ENCODE measurements at regions of chr3 and their contacts with region 1.

Region 1: GRCh38 chr3:120558771-120559241 is 37.3 kb upstream of the NDUFB4 start:
- DNase-seq: peak; percentile 91
- ATAC-seq: peak; percentile 53

Region 2: DNA sequence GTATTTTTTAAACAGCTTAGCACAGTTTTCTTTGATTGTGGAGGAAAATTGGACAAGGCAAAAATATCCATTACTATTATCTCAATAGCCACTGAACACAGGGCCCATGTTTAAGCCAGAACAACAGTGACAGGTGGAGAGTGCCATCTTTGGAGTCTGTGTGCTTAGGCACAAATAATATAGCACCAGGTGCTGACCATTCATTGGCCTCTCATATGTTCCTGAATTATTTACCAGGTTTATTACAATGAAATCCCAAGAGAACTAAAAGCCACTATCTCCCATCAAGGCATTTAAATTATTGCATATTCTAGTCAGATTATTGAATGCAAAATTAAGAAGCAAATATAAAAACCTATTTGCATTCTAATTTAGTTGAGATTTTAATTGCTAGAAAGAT is 313.4 kb before region 1 on chr3:
- intact Hi-C with region 1: loop called (anchors 10 kb)
- DNase-seq: no peak
- ATAC-seq: no peak

Region 3: GRCh38 chr3:120417272-120417911 is 141.4 kb before region 1 on chr3:
- intact Hi-C with region 1: loop called (anchors 2 kb)
- DNase-seq: peak; percentile 90
- ATAC-seq: peak; percentile 51

Region 4: GRCh38 chr3:120795017-120795648 is 236.3 kb after region 1 on chr3:
- intact Hi-C with region 1: loop called (anchors 5 kb)
- DNase-seq: peak; percentile 88
- ATAC-seq: peak; percentile 89